Body of pancreas (tissue), 4 donors: ENCODE measurements at regions of chr18 and their contacts with region 1.

Region 1: DNA sequence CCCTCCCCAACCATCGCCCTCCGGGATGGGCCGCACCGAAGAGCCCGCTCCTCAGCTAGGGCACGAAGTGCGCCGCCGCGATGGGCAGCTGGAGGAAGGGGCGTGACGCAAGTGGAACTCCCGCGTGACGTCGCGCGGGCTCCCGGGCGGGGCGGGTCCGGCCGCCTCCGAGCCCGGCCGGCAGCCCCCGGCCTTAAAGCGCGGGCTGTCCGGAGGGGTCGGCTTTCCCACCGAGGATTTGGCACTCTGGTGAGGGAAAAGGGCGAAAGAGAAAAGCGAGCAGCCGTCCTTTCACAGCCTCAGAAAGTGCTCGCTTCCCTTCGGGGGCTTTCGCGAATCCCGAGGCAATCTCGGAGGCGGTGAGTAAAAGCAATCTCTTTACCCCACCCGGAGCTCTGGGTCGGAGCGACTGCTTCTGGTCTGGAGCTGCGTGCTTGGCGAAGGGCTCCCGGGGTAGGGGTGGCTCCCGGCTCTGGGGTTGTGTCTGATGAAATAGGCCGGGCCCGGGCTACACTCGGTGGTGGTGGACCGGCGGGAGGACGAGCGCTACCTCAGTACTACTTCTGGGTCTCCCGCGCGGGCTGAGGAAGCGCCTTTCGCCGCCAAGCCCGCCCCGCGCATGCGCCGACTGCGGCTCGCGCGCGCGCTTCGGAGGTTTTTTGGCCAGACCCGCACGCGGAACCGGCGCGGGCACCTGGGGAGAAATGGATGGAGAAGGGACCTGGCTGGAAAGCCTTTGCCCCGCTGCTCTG is at the start of gene RBBP8:
- DNase-seq: peak; percentile 81 to 86 (median 84)
- ATAC-seq: peak; percentile 90
- H3K4me3 ChIP-seq: peak within 1 kb of the TSS; percentile 41 to 84
- H3K27ac ChIP-seq: peak within 1 kb of the TSS; percentile 90 to 99 (median 94)
- H3K4me1 ChIP-seq: peaks cover 11% of the 10 kb centered on the region
- H3K27me3 ChIP-seq: no peaks in the 10 kb centered on the region
- CTCF ChIP-seq: no peak
- POLR2A ChIP-seq: peak; percentile 70 to 87 (median 83)
- total RNA-seq, gene RBBP8: 30.9 to 32.6 TPM

Region 2: GRCh38 chr18:22856870-22857269 is 76.5 kb before region 1 on chr18:
- intact Hi-C with region 1: loop called (anchors 10 kb)
- DNase-seq: no peak
- ATAC-seq: no peak
- H3K4me3 ChIP-seq: no peak overlapping the region
- H3K27ac ChIP-seq: no peak overlapping the region
- H3K4me1 ChIP-seq: no peaks in the 10 kb centered on the region
- H3K27me3 ChIP-seq: no peaks in the 10 kb centered on the region
- CTCF ChIP-seq: no peak
- POLR2A ChIP-seq: no peak